ENCODE measurements at regions of chr15 and their contacts with region 1.

Region 1: GRCh38 chr15:91561371-91562100 is 292.0 kb upstream of the SLCO3A1 start:
- DNase-seq: peak; percentile 90
- H3K4me3 Mint-ChIP-seq: peak overlapping the region; percentile 55
- H3K27ac Mint-ChIP-seq: peak overlapping the region; percentile 95
- H3K4me1 Mint-ChIP-seq: peaks cover 16% of the 10 kb centered on the region
- H3K27me3 Mint-ChIP-seq: no peaks in the 10 kb centered on the region
- CTCF ChIP-seq: no peak

Region 2: DNA sequence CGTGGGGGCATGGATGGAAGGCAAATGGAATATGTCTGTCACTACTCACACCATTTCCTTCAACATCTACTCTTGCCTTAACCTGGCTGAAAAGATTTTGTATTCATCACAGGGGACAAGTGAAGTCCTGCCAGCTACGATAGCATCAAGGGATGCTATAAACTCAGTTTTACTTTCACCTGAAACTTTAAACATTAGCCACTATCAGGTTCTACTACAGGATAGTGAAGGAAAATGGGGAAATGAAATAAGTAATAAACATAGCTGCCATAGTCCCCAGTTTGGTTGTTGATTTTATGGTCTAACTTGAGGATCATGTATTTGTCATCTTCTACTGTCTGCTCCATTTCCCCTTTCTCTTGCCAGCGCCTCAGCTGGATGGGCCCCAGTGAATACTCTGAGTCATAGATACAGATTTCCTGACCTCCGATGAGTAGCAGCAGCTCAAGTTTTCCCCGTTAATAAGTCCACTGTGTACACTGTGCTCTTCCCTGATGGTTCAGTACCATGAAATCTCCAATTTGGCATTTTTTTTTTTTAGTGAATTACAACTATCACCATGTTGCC is 46.3 kb before region 1 on chr15:
- CTCF ChIA-PET with region 1: no interaction called
- POLR2A ChIA-PET with region 1: no interaction called
- intact Hi-C with region 1: loop called (anchors 5 kb)
- DNase-seq: peak; percentile 75
- H3K4me3 Mint-ChIP-seq: no peak overlapping the region
- H3K27ac Mint-ChIP-seq: no peak overlapping the region
- H3K4me1 Mint-ChIP-seq: peaks cover 18% of the 10 kb centered on the region
- H3K27me3 Mint-ChIP-seq: no peaks in the 10 kb centered on the region
- CTCF ChIP-seq: no peak

Region 3: DNA sequence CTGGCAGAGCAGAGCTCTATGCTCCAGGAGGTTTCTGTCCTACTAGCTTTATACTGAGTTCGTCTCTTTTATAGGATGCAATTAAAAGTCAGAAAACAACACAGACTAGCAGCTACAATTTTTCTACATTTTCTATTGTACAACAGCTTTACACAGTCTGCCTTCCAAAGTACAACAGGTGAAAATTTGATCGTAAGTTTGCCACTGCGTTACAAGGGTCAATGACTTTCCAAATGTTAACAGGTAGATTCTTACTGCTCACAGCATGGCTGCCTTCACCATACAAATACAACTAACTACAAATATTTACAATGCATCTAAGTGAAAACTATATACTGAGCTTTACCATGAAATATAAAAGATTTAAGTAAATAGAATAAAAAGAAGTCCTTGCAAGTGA is 23.4 kb after region 1 on chr15:
- CTCF ChIA-PET with region 1: no interaction called
- POLR2A ChIA-PET with region 1: no interaction called
- intact Hi-C with region 1: no loop called
- DNase-seq: no peak
- H3K4me3 Mint-ChIP-seq: no peak overlapping the region
- H3K27ac Mint-ChIP-seq: no peak overlapping the region
- H3K4me1 Mint-ChIP-seq: no peaks in the 10 kb centered on the region
- H3K27me3 Mint-ChIP-seq: peaks cover 12% of the 10 kb centered on the region
- CTCF ChIP-seq: no peak

Region 4: DNA sequence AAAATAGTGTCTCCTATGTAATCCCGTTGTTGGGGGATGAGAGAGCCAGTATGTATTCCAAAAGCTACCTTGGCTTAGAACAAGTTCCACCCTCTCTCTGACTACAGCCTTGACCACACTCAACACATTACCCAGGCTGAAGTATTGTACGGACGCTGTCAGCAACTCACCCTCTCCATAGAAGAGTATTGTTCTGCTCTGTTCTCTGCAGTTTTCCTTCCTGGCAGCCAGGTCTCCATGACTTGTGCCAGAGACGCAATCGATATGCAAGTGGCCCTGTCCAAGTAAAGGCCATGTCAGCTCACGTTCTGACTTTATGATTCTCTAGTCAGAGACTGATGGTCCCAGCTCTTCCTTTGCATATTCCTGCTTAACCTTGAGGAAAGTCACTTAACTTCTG is 127.8 kb after region 1 on chr15:
- CTCF ChIA-PET with region 1: no interaction called
- POLR2A ChIA-PET with region 1: interaction called, 3 read pairs
- intact Hi-C with region 1: loop called (anchors 10 kb)
- DNase-seq: no peak
- H3K4me3 Mint-ChIP-seq: no peak overlapping the region
- H3K27ac Mint-ChIP-seq: no peak overlapping the region
- H3K4me1 Mint-ChIP-seq: peaks cover 6% of the 10 kb centered on the region
- H3K27me3 Mint-ChIP-seq: peaks cover 26% of the 10 kb centered on the region
- CTCF ChIP-seq: no peak

Measured in MCF 10A (cell line).